ENCODE measurements at regions of chr6 and their contacts with region 1.

Region 1: GRCh38 chr6:36094753-36095496 is 35.4 kb upstream of the MAPK13 start:
- DNase-seq: peak; percentile 90
- H3K4me3 Mint-ChIP-seq: no peak overlapping the region
- H3K27ac Mint-ChIP-seq: peak overlapping the region; percentile 42
- H3K4me1 Mint-ChIP-seq: peaks cover 29% of the 10 kb centered on the region
- H3K27me3 Mint-ChIP-seq: no peaks in the 10 kb centered on the region

Region 2: GRCh38 chr6:36000451-36000850 is 94.5 kb before region 1 on chr6:
- CTCF ChIA-PET with region 1: interaction called, 10 read pairs
- intact Hi-C with region 1: no loop called
- DNase-seq: no peak
- H3K4me3 Mint-ChIP-seq: no peak overlapping the region
- H3K27ac Mint-ChIP-seq: no peak overlapping the region
- H3K4me1 Mint-ChIP-seq: no peaks in the 10 kb centered on the region
- H3K27me3 Mint-ChIP-seq: peaks cover 2% of the 10 kb centered on the region

Region 3: GRCh38 chr6:36075656-36076055 is 19.3 kb before region 1 on chr6:
- CTCF ChIA-PET with region 1: interaction called, 25 read pairs
- intact Hi-C with region 1: no loop called
- DNase-seq: no peak
- H3K4me3 Mint-ChIP-seq: no peak overlapping the region
- H3K27ac Mint-ChIP-seq: no peak overlapping the region
- H3K4me1 Mint-ChIP-seq: peaks cover 37% of the 10 kb centered on the region
- H3K27me3 Mint-ChIP-seq: no peaks in the 10 kb centered on the region

Region 4: DNA sequence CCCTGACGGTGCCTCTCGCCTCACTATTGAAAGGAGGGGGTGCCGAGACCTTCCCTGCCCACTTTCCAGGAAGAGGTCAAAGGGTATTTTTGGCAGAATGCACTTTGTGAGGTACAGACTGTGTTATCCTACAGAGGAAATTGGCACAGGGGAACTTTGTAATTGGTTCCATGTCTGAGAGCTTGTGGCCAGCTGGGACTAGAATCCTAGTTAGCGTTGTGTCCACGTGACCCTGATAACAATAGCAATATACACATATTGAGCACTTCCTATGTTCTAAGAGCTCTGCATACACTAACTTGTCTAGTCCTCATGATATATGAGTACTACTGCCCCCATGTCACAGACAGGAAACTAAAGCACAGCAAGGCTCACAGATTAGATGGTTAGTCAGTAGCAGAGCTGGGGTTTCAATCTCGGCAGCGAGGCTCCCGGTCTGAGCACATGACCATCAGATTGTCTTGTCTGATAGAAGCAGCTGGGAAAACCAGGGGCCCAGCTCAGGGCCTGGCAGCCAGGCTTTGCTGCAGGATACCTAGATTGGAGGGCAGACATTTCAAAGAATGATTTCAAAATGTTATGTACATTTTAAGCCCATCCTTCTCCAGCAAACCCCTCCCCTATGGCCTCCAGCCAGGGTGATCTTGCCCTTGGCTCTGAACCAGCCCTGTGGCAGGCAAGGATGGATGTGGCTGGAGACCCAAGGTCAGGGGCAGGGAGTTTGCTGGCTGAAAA is 36.8 kb after region 1 on chr6:
- CTCF ChIA-PET with region 1: interaction called, 12 read pairs
- intact Hi-C with region 1: no loop called
- DNase-seq: peak; percentile 85
- H3K4me3 Mint-ChIP-seq: peak overlapping the region; percentile 83
- H3K27ac Mint-ChIP-seq: peak overlapping the region; percentile 93
- H3K4me1 Mint-ChIP-seq: peaks cover 41% of the 10 kb centered on the region
- H3K27me3 Mint-ChIP-seq: no peaks in the 10 kb centered on the region

Region 5: DNA sequence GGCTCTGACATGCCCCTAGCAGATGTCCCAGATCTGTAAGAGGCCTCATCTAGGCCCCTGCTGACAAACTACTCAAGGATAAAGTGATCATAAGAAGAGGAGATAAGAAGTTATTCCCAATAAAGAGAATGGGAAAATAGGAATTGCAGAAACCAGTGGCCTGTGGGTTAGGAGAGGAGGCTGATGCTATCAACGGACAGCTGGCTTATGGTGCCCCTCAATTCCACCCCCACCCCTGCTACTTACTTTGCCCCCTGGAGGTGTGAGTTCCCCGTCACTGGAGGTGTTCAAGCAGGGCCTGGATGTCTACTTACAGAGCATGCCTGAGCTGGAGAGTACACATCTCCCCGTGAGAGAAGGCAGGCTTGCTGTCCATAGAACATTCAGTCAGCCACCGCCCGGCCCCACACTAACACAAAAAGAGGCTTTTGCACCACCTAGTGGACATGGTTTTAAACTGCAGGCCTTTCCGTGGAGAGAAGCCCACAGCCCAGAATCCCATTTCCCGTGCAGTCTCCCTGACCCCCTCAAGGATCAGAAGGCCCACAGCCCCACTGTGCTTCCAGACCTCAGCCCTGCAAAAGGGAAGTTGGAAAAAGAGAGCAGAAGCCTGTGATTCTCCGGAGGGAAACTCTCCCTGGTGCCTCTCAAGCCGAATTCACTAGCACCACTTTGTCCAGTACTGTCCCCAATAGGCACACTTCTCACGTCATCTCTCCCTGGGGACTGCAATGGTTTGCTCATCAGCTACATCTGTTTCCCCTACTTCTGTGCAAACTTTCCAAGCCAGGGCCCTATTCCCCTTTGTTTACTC is 265.5 kb after region 1 on chr6:
- CTCF ChIA-PET with region 1: interaction called, 5 read pairs
- intact Hi-C with region 1: loop called (anchors 1 kb)
- DNase-seq: peak; percentile 83
- H3K4me3 Mint-ChIP-seq: no peak overlapping the region
- H3K27ac Mint-ChIP-seq: no peak overlapping the region
- H3K4me1 Mint-ChIP-seq: peaks cover 9% of the 10 kb centered on the region
- H3K27me3 Mint-ChIP-seq: no peaks in the 10 kb centered on the region

Region 6: DNA sequence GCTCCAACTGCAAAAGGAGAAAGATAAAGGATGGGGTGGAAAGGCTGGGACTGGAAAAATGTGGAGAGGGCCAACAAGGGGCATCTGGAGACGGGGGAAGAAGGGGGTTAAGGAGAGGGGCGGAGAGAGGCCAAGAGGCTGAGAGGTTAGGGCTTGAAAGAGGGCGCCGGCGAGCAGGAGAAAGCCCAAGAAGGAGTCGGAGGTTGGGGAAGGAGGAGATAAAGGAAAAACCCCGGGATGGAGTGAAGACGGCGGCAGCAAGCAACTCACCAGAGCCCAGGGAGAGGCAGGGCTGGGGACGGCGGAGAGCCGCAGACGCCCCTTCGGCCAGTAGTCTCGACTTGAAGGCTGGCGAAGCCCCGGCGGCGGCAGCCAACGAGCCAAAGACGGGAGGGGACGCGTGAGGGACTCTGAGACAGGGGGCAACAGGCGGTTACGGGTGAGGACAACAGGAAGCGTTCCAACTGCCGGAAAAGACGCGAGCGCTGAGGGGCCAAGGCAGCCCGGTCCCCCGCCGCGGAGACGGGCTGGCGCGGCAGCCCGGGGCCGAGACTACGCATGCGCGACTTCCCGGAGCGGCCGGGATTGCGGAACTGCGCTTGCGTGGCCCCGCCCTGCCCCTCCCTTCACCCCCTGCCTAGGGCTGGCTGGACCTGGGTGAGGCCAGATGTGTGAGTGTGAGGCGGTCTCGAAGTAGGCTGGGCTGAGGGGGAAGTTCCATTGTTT is 452.2 kb after region 1 on chr6 and contains the start of gene STK38:
- CTCF ChIA-PET with region 1: no interaction called
- intact Hi-C with region 1: no loop called
- DNase-seq: peak; percentile 95
- H3K4me3 Mint-ChIP-seq: peak within 1 kb of the TSS; percentile 97
- H3K27ac Mint-ChIP-seq: peak within 1 kb of the TSS; percentile 97
- H3K4me1 Mint-ChIP-seq: peaks cover 39% of the 10 kb centered on the region
- H3K27me3 Mint-ChIP-seq: no peaks in the 10 kb centered on the region
- total RNA-seq, gene STK38: 23.6 to 24.4 TPM